Thyroid gland (tissue), 4 donors: ENCODE measurements at regions of chr14 and their contacts with region 1.

Region 1: GRCh38 chr14:68918612-68919011 is 60.5 kb downstream of the ACTN1 start:
- DNase-seq: no peak
- H3K4me3 ChIP-seq: no peak overlapping the region
- H3K27ac ChIP-seq: no peak overlapping the region
- H3K4me1 ChIP-seq: peaks cover 4 to 9% of the 10 kb centered on the region in 2 donors
- H3K27me3 ChIP-seq: no peaks in the 10 kb centered on the region
- CTCF ChIP-seq: no peak
- POLR2A ChIP-seq: no peak

Region 2: GRCh38 chr14:68741839-68742470 is 176.7 kb before region 1 on chr14:
- intact Hi-C with region 1: no loop called
- DNase-seq: no peak
- H3K4me3 ChIP-seq: no peak overlapping the region
- H3K27ac ChIP-seq: no peak overlapping the region
- H3K4me1 ChIP-seq: peaks cover 0 to under 1% of the 10 kb centered on the region in 2 donors
- H3K27me3 ChIP-seq: no peaks in the 10 kb centered on the region
- CTCF ChIP-seq: no peak
- POLR2A ChIP-seq: no peak

Region 3: DNA sequence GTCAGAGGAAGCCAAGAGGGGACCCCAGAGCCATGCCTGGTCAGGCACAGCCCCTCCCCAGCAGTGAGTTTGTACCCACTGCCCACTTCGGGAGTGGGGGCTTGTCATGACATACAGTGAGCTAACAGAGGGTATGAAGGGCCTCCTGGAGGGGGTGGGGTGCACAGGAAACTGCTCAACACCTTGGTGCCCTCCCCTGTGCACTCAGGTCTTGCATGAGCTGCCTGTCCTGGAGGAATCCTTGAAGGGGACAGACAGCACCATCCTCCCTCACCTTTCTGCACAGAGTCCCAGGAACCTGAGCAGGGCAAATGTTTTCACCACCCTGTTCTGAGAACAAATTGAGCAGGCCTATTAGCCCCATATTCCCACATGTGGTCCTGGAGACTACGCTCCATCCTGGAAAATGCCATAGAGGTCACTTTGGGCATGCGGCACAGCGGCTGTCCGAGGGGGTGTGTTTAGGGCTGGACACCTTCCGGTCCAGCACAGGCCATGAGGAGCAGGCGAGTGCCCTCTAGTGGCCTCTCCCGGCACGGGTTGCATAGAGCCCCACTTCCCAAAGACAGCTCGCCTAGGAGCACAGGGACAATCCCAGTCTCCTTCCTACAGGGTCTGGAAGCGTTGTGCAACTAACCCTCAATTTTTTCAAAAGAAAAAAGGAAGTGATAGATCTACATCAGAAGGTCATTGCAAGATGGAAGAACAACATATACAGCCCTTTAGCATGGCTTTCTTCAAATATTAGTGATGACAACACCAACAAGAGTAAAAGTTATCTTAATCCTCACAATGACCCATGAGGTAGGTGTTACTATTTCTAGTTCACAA is 93.9 kb before region 1 on chr14:
- intact Hi-C with region 1: no loop called
- DNase-seq: peak; percentile 89 to 90
- H3K4me3 ChIP-seq: no peak overlapping the region
- H3K27ac ChIP-seq: no peak overlapping the region
- H3K4me1 ChIP-seq: peaks cover 0 to 7% of the 10 kb centered on the region in 2 donors
- H3K27me3 ChIP-seq: no peaks in the 10 kb centered on the region
- CTCF ChIP-seq: peak; percentile 74 to 93 (median 84)
- POLR2A ChIP-seq: no peak

Region 4: DNA sequence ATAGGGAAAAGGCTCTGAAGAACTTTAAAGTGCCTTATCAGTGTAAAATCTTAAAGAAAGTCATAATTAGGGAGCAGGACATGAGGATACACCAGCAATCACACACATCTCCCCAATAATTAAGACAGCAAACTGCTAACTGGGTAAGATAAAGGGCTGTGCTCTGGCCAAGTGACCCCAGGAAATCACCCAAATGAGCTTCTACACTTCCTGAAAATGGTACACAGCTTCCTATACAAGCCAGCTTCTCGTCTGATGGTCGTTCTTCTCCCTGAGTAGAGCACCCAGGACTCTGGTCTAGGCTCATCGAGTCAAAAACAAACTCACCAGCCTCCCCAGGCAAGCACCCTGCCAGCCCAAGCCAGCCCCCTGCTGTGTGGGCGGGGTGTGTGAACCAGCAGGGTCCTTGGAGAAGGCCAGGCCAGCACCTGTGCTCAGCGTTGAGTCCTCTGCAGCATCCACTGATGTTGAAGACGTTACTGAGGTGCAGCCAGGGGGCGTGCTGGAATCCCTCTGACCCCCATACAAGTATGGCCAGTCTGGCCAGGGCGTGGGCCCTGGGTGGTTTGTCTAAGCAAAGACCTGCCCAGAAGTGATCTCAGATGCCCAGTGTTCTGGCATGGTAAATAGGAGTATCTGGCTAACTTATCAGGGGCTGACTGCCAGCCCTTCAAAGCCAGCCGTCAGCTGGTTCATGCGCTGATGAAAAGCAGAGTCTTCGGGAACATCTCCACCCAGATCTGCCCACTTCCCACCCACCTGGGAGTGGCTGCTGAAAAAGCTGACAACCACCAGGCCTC is 19.1 kb after region 1 on chr14:
- intact Hi-C with region 1: loop called (anchors 2 kb)
- DNase-seq: peak; percentile 20 to 72
- H3K4me3 ChIP-seq: no peak overlapping the region
- H3K27ac ChIP-seq: peak overlapping the region in 2 of 3 donors; percentile 70 to 74
- H3K4me1 ChIP-seq: peaks cover 25 to 56% of the 10 kb centered on the region in 2 donors
- H3K27me3 ChIP-seq: no peaks in the 10 kb centered on the region
- CTCF ChIP-seq: peak in 2 of 6 experiments; percentile 40 to 46
- POLR2A ChIP-seq: no peak

Region 5: GRCh38 chr14:68979021-68979782 is 60.6 kb after region 1 on chr14 and contains the start of gene ACTN1:
- intact Hi-C with region 1: loop called (anchors 5 kb)
- DNase-seq: peak; percentile 91 to 93
- H3K4me3 ChIP-seq: peak within 1 kb of the TSS; percentile 60 to 81 (median 76)
- H3K27ac ChIP-seq: peak within 1 kb of the TSS; percentile 61 to 93 (median 92)
- H3K4me1 ChIP-seq: peaks cover 12 to 31% of the 10 kb centered on the region in 2 donors
- H3K27me3 ChIP-seq: no peaks in the 10 kb centered on the region
- CTCF ChIP-seq: no peak
- POLR2A ChIP-seq: peak; percentile 72 to 78
- total RNA-seq, gene ACTN1: 48.1 to 90.4 (median 64.8) TPM